Activated naive CD4-positive, alpha-beta T cell treated with anti-CD3 and anti-CD28 coated beads for 36 hours (primary cell): ENCODE measurements at regions of chrX and their contacts with region 1.

Region 1: DNA sequence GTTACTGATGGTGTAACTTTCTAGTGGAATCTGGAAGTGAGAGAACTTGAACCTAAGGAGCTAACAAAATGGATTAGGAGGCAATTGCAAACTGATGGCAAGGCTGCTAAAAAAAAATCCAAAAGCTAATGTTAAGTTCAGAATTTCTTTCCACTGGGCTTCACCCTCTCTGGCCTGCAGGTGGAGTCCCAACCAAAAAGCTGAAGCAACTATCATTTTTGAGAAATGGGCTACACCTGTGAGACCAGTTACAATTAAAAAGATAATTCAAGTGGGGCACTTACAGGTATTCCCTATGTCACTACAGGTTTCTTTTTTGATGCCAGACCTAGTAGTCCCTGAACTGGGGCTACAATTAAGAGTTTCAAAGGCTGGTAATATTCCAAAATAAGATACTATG is 142.1 kb upstream of the FTHL17 start:
- DNase-seq: peak; percentile 21
- H3K4me3 Mint-ChIP-seq: no peak overlapping the region
- H3K27ac Mint-ChIP-seq: no peak overlapping the region
- H3K4me1 Mint-ChIP-seq: no peaks in the 10 kb centered on the region
- H3K27me3 Mint-ChIP-seq: no peaks in the 10 kb centered on the region

Region 2: GRCh38 chrX:31126205-31126604 is 87.7 kb before region 1 on chrX:
- CTCF ChIA-PET with region 1: no interaction called
- intact Hi-C with region 1: no loop called
- DNase-seq: no peak
- H3K4me3 Mint-ChIP-seq: no peak overlapping the region
- H3K27ac Mint-ChIP-seq: no peak overlapping the region
- H3K4me1 Mint-ChIP-seq: no peaks in the 10 kb centered on the region
- H3K27me3 Mint-ChIP-seq: peaks cover 2% of the 10 kb centered on the region

Region 3: DNA sequence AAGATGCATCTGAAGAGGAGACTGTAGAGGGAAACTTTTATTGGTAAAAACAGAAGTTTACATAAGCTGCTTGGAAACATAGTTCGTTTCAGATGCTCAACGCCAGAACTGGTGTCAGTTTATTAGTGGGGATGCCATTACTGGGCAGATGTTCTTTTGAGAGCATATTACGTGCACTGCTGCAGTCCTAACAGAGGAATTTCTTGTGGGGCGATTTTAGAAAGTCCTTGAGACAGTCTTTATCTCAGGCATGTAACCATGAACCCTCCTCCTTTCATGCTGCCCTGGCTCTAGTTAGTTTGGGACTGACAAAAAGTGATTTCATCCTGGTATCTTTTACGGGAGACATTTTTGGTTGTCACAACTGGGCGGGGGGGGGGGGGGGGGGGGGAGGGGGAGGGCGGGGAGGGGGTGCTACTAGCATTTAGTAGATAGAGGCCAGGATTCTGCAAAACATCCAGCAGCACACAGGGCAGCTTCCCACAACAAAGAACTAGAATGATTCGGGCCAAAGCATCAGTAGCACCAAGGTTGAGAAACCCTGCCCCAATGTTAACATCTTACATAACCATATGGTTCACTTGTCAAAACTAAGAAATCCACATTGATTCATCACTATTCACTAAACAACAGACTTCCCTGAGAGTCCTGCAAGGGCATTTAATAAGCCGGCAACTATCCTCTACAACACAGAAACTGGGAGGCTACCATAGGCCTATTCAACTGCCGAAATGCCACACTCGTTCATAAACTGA is 23.5 kb before region 1 on chrX:
- CTCF ChIA-PET with region 1: no interaction called
- intact Hi-C with region 1: no loop called
- DNase-seq: no peak
- H3K4me3 Mint-ChIP-seq: no peak overlapping the region
- H3K27ac Mint-ChIP-seq: no peak overlapping the region
- H3K4me1 Mint-ChIP-seq: no peaks in the 10 kb centered on the region
- H3K27me3 Mint-ChIP-seq: no peaks in the 10 kb centered on the region

Region 4: GRCh38 chrX:31423609-31424189 is 209.8 kb after region 1 on chrX:
- CTCF ChIA-PET with region 1: no interaction called
- intact Hi-C with region 1: loop called (anchors 5 kb)
- DNase-seq: peak; percentile 23
- H3K4me3 Mint-ChIP-seq: no peak overlapping the region
- H3K27ac Mint-ChIP-seq: no peak overlapping the region
- H3K4me1 Mint-ChIP-seq: no peaks in the 10 kb centered on the region
- H3K27me3 Mint-ChIP-seq: no peaks in the 10 kb centered on the region